ENCODE measurements at regions of chr18 and their contacts with region 1.

Region 1: DNA sequence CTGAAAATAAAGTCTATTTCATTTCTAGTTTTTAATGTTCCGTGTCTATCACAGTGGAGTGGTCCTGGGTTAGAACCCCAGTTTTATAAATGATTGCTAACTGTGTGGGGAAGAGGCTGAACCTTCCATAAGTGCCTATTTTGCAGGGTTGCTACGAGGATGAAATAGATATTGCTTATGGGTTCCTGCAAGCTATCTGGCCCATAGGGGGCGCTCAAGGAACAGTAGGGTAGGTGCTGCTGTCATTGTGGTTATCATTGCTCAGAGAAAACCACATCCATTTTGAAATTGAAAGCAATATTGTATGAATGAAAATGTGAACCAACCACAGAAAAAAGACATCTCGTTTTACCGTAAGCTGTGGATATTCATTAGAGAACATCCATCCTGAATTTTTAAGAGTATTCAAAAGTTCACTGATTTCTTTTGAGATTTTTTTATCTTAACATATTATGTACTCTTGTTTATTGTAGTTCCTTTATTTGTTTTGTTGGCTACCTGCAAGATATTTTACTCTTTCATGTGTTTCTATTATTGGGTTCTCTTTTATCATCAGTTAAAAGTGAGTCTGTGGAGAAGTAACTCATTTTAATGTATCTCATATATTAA is 261.6 kb downstream of the NAPG start:
- DNase-seq: peak; percentile 37
- H3K4me3 ChIP-seq: no peak overlapping the region
- H3K27ac ChIP-seq: no peak overlapping the region
- H3K4me1 ChIP-seq: no peaks in the 10 kb centered on the region
- H3K27me3 ChIP-seq: no peaks in the 10 kb centered on the region
- CTCF ChIP-seq: peak; percentile 36 to 58 (median 45)
- POLR2A ChIP-seq: no peak

Region 2: DNA sequence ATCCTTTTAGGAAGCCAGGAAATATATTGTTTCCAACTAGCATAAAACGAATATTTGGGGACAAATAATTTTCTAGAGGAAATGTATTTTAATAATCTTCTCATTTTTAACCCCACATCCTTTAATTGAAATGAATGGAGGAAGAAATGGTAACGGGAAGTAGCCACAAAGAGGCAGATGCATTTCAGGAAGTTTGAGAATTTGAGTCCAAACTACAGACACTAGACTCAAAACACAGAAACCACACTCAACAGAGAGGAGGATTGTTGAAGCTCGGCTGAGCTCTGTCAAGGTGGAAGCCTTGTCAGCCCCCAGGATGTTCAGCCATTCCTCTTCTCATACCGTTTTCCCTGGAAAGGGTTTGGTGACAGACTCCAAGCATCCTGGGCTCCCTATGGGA is 26.9 kb after region 1 on chr18:
- intact Hi-C with region 1: no loop called
- DNase-seq: no peak
- H3K4me3 ChIP-seq: no peak overlapping the region
- H3K27ac ChIP-seq: no peak overlapping the region
- H3K4me1 ChIP-seq: no peaks in the 10 kb centered on the region
- H3K27me3 ChIP-seq: no peaks in the 10 kb centered on the region
- CTCF ChIP-seq: no peak
- POLR2A ChIP-seq: no peak

Region 3: GRCh38 chr18:10841203-10841602 is 53.8 kb after region 1 on chr18:
- intact Hi-C with region 1: loop called (anchors 10 kb)
- DNase-seq: no peak
- H3K4me3 ChIP-seq: no peak overlapping the region
- H3K27ac ChIP-seq: no peak overlapping the region
- H3K4me1 ChIP-seq: no peaks in the 10 kb centered on the region
- H3K27me3 ChIP-seq: no peaks in the 10 kb centered on the region
- CTCF ChIP-seq: no peak
- POLR2A ChIP-seq: no peak

Region 4: DNA sequence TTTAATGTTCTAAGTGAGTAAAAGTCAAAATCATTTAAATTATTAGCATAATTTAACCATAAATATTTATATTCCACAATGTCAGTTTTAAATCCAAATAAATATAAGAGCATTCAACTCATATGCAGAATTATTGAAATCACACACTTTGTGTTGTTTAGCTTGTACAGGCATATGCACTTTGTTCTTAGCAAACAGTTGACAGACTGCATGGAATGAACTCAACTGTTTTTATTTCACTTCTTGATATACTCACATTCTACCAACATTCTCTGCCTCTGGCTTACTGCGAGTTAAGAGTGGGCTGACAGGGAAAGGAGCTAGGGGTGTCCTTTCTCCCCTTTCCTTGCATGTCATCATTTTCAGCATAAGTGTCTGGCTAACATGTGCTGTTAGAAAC is 369.6 kb after region 1 on chr18:
- intact Hi-C with region 1: loop called (anchors 2 kb)
- DNase-seq: no peak
- H3K4me3 ChIP-seq: no peak overlapping the region
- H3K27ac ChIP-seq: no peak overlapping the region
- H3K4me1 ChIP-seq: no peaks in the 10 kb centered on the region
- H3K27me3 ChIP-seq: no peaks in the 10 kb centered on the region
- CTCF ChIP-seq: no peak
- POLR2A ChIP-seq: no peak